Mammary epithelial cell (primary cell): ENCODE measurements at regions of chr11 and their contacts with region 1.

Region 1: DNA sequence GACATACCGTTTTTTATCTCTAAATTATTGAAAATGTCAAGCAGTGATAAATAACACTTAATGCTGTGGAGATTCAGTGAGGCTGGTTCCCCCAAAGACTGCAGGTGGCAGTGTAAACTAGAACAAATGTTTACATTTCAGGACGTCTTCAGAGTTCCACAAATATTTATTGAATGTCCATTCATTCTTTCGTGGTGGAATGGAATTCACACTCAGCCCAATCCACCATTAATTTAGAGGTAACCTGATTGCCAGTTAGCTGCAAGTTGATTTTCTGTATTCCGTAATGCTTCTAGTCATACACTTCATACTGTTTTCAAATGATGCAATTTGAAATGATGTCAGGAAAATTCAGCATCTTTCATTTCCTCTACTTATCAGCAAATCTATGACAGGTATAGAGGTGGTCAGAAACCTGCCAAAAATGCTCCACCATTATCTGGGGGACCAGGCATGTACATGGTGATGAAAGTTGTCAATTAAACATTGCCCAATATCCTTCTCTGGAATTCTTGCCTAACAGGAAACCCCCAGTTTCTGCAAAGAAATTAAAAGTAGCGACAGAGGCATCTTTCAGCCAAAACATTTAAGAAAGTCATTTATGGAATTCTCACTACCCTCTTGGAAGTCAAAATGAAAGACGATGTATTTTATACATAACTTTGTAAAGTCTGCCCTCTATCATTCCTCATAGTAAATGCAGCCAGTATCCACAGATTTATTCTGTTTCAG is 94.3 kb upstream of the BMAL1 start:
- DNase-seq: peak; percentile 77
- H3K4me3 ChIP-seq: peak overlapping the region in 2 of 3 experiments; percentile 4 to 27
- H3K27ac ChIP-seq: peak overlapping the region; percentile 5
- H3K4me1 ChIP-seq: peaks cover 7% of the 10 kb centered on the region
- H3K27me3 ChIP-seq: no peaks in the 10 kb centered on the region
- CTCF ChIP-seq: peak; percentile 56 to 63

Region 2: GRCh38 chr11:13152736-13153533 is 30.3 kb before region 1 on chr11:
- CTCF ChIA-PET with region 1: no interaction called
- dilution Hi-C with region 1: no loop called
- in situ Hi-C with region 1: no loop called
- intact Hi-C with region 1: loop called (anchors 2 kb)
- DNase-seq: no peak
- H3K4me3 ChIP-seq: no peak overlapping the region
- H3K27ac ChIP-seq: no peak overlapping the region
- H3K4me1 ChIP-seq: peaks cover 15% of the 10 kb centered on the region
- H3K27me3 ChIP-seq: no peaks in the 10 kb centered on the region
- CTCF ChIP-seq: peak; percentile 65 to 73

Region 3: GRCh38 chr11:13384908-13385640 is 201.8 kb after region 1 on chr11:
- CTCF ChIA-PET with region 1: no interaction called
- dilution Hi-C with region 1: no loop called
- in situ Hi-C with region 1: no loop called
- intact Hi-C with region 1: loop called (anchors 1 kb)
- DNase-seq: peak; percentile 22
- H3K4me3 ChIP-seq: no peak overlapping the region
- H3K27ac ChIP-seq: no peak overlapping the region
- H3K4me1 ChIP-seq: no peaks in the 10 kb centered on the region
- H3K27me3 ChIP-seq: no peaks in the 10 kb centered on the region
- CTCF ChIP-seq: peak; percentile 67 to 68